ENCODE measurements at regions of chr15 and their contacts with region 1.

Region 1: DNA sequence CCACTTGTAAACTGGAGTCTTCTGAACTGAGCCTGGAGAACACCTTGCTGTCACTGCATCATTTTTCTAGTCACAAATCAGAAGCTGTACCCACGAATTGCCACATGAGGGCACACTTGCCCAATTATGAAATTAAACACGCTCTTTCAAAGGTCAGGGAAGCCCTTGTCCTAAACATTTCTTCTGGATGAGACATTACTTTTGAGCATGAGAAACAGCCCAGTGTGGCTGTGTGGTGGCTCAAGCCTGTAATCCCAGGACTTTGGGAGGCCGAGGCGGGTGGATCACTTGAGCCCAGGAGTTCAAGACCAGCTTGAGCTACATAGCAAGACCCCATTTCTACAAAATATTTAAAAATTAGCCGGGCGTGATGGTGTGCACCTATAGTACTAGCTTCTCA is 27.5 kb upstream of the CFAP161 start:
- DNase-seq: peak; percentile 42
- H3K4me3 ChIP-seq: no peak overlapping the region
- CTCF ChIP-seq: peak; percentile 65

Region 2: GRCh38 chr15:81091889-81092558 is 14.5 kb before region 1 on chr15:
- CTCF ChIA-PET with region 1: interaction called, 30 read pairs
- POLR2A ChIA-PET with region 1: no interaction called
- DNase-seq: peak; percentile 86
- H3K4me3 ChIP-seq: peak overlapping the region; percentile 9
- CTCF ChIP-seq: no peak

Region 3: DNA sequence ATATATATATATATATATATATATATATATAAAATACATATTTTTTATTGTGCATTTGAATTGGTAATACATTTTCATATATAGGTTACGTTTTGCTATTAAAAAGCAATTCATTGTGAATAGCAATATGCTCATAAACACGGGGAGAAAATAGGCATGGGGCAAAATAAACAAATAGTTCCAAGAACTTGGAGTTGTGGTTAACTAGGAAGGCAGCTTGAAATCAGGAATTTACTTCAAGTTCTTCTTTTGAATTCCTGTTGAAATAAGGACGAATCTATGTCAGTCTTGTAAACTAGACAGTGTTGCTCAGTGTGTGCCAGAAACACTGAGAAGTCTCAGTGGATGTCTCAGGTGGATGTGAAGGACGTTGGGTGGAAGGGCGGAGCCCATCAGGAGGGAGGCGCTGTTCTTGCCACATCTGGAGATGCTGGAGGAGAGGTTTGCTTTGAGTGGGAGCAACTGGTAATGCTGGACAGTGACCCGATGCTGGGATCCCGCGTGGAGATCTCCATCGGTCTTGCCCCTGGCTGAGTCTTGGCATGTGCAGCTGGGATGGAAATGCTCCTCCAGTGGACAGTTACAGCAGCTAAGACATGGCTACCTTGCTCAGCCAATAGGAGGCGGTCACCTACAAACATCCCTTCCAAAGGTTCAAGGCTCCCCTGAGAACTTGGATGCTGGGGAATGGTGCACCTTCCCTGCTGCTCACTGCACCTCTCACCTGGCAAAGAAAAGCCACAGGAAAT is 92.6 kb after region 1 on chr15:
- CTCF ChIA-PET with region 1: no interaction called
- POLR2A ChIA-PET with region 1: no interaction called
- DNase-seq: no peak
- H3K4me3 ChIP-seq: no peak overlapping the region
- CTCF ChIP-seq: no peak